Naive thymus-derived CD8-positive, alpha-beta T cell (primary cell): ENCODE measurements at regions of chr3 and their contacts with region 1.

Region 1: DNA sequence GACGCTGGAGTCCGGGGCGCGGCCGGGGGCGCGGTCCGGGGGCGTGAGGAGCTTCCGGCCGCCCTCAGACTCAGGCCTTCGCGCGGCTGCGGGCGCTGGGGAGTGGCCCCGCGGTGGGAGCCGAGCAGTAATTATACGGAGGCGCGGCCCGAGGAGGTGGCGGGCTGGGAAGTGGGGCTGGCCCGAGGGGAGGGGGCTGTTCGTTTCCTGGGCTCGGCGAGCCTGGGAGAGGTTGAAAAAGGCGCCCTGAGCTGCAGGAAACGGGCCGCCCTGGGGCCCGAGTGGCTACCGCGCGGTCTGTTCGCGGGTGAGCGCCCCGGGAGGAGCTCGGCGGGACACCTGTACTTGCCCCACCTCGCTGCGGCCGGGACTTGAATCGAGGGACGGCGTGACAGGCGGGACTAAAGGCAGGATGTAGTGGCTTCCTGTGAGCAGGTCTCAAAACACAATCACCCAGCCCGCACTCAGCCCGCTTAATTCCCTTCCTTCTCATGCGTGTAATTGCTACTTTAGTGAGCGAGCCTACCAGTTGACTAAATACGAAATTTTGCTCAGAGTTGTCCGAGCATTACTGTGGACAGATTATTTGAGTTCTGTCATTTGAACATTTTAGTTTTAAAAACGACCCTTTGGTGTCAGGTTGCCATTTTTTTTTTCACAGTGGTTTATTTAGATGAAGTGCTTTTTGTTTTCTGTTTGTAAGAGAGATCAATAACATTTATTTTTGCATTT is 860 bp downstream of the RASA2 start:
- DNase-seq: peak; percentile 68 to 94 (median 84)
- ATAC-seq: peak; percentile 68 to 77
- H3K4me3 Mint-ChIP-seq: peak overlapping the region; percentile 86 to 97 (median 92)
- H3K27ac Mint-ChIP-seq: peak overlapping the region; percentile 86 to 97 (median 96)
- H3K4me1 Mint-ChIP-seq: peaks cover 37 to 81% (median 77%) of the 10 kb centered on the region in 4 donors
- H3K27me3 Mint-ChIP-seq: no peaks in the 10 kb centered on the region

Region 2: GRCh38 chr3:141266797-141267555 is 220.7 kb before region 1 on chr3:
- POLR2A ChIA-PET with region 1: interaction called, 12 read pairs
- DNase-seq: peak; percentile 7 to 83 (median 42)
- ATAC-seq: peak; percentile 87 to 88
- H3K4me3 Mint-ChIP-seq: peak overlapping the region; percentile 81 to 96 (median 92)
- H3K27ac Mint-ChIP-seq: peak overlapping the region; percentile 94 to 99 (median 98)
- H3K4me1 Mint-ChIP-seq: peaks cover 36 to 71% (median 48%) of the 10 kb centered on the region in 4 donors
- H3K27me3 Mint-ChIP-seq: no peaks in the 10 kb centered on the region

Region 3: GRCh38 chr3:141279077-141279967 is 208.4 kb before region 1 on chr3:
- POLR2A ChIA-PET with region 1: no interaction called
- DNase-seq: peak in 6 of 10 donors; percentile 17 to 67 (median 43)
- ATAC-seq: peak; percentile 88 to 93
- H3K4me3 Mint-ChIP-seq: peak overlapping the region in 2 of 10 donors; percentile 18 to 22
- H3K27ac Mint-ChIP-seq: peak overlapping the region in 7 of 10 donors; percentile 22 to 83 (median 54)
- H3K4me1 Mint-ChIP-seq: peaks cover 17 to 31% (median 22%) of the 10 kb centered on the region in 4 donors
- H3K27me3 Mint-ChIP-seq: no peaks in the 10 kb centered on the region

Region 4: DNA sequence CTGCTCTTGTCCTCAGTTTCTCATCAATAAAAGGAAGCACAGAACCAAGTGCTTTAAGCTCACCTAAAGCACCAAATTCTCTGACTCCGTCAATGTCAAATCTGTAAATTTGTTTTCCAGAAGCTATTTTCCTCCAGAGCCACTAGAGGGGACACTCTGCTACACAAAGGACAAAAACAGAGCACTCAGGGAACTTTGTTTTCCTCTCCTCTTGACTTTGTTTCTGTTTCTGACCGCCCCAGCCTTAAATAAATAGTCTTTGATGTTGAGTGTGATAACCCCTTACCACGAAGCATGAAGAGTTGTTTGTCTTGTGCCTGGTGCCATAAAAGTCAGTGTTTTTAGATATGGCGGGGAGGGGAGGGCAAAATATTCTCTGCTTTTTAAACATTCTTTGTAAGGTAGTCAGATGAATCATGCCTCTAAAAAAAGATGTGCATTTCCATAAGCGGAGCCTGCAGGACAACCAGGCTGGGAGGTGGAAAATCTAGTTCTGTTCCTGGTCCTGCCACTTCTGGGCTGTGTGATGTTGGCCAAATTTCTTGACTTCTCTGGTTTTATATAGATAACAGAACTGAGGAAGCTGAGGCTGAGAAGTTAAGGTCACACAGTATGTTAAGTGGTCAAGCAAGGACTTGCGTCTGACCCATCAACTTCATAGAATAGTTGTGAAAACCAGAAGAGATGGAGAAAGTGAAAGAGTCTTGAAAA is 126.6 kb before region 1 on chr3:
- POLR2A ChIA-PET with region 1: no interaction called
- DNase-seq: peak in 5 of 10 donors; percentile 1 to 56 (median 52)
- ATAC-seq: peak; percentile 68 to 70
- H3K4me3 Mint-ChIP-seq: peak overlapping the region in 3 of 10 donors; percentile 16 to 51 (median 41)
- H3K27ac Mint-ChIP-seq: peak overlapping the region in 4 of 10 donors; percentile 41 to 82 (median 54)
- H3K4me1 Mint-ChIP-seq: peaks cover 2 to 9% (median 6%) of the 10 kb centered on the region in 4 donors
- H3K27me3 Mint-ChIP-seq: no peaks in the 10 kb centered on the region

Region 5: GRCh38 chr3:141477224-141477623 is 10.5 kb before region 1 on chr3:
- POLR2A ChIA-PET with region 1: interaction called, 12 read pairs
- DNase-seq: no peak
- ATAC-seq: no peak
- H3K4me3 Mint-ChIP-seq: no peak overlapping the region
- H3K27ac Mint-ChIP-seq: peak overlapping the region in 4 of 10 donors; percentile 24 to 90 (median 38)
- H3K4me1 Mint-ChIP-seq: peaks cover 31 to 48% (median 47%) of the 10 kb centered on the region in 4 donors
- H3K27me3 Mint-ChIP-seq: no peaks in the 10 kb centered on the region

Region 6: GRCh38 chr3:141514382-141514781 is 26.7 kb after region 1 on chr3:
- POLR2A ChIA-PET with region 1: interaction called, 18 read pairs
- DNase-seq: no peak
- ATAC-seq: no peak
- H3K4me3 Mint-ChIP-seq: no peak overlapping the region
- H3K27ac Mint-ChIP-seq: peak overlapping the region in 7 of 10 donors; percentile 11 to 79 (median 65)
- H3K4me1 Mint-ChIP-seq: peaks cover 22 to 65% (median 50%) of the 10 kb centered on the region in 4 donors
- H3K27me3 Mint-ChIP-seq: no peaks in the 10 kb centered on the region

Region 7: GRCh38 chr3:141530133-141530768 is 42.6 kb after region 1 on chr3:
- POLR2A ChIA-PET with region 1: interaction called, 30 read pairs
- DNase-seq: peak in 7 of 10 donors; percentile 15 to 70 (median 35)
- ATAC-seq: peak; percentile 88 to 92
- H3K4me3 Mint-ChIP-seq: peak overlapping the region; percentile 41 to 86 (median 78)
- H3K27ac Mint-ChIP-seq: peak overlapping the region; percentile 80 to 97 (median 94)
- H3K4me1 Mint-ChIP-seq: peaks cover 28 to 78% (median 70%) of the 10 kb centered on the region in 4 donors
- H3K27me3 Mint-ChIP-seq: no peaks in the 10 kb centered on the region

Region 8: GRCh38 chr3:141561426-141562034 is 73.8 kb after region 1 on chr3:
- POLR2A ChIA-PET with region 1: interaction called, 30 read pairs
- DNase-seq: peak in 9 of 10 donors; percentile 8 to 78 (median 60)
- ATAC-seq: peak in 1 of 2 donors; percentile 33
- H3K4me3 Mint-ChIP-seq: peak overlapping the region in 3 of 10 donors; percentile 5 to 32 (median 28)
- H3K27ac Mint-ChIP-seq: peak overlapping the region in 9 of 10 donors; percentile 42 to 86 (median 74)
- H3K4me1 Mint-ChIP-seq: peaks cover 10 to 35% (median 31%) of the 10 kb centered on the region in 4 donors
- H3K27me3 Mint-ChIP-seq: no peaks in the 10 kb centered on the region